ENCODE measurements at regions of chr6 and their contacts with region 1.

Region 1: DNA sequence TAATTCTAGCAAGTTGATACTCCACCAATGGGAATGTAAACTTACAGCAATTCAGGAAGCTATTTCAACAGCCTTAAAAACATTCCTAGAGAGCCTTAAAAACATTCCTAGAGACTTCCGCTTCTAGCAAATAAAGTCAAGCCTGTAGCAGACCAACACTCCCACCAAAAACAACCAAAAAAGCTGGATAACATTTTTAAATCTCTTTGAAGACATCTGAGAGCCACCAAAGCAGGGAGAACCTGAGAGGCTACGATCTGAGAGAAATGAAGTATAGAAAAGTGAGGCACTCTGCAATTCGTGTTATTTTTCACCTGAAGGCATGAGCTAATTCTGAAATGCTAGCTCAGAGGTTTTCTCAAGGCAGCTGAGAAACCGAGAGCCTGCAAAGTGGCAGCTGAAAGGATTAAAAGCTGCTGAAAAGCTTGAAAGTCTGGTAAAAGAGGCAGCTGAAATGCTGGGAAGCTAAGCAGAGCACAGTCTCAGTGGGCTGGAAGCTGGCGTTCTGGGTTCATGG is 20.9 kb downstream of the GPR63 start:
- DNase-seq: no peak
- H3K4me3 Mint-ChIP-seq: no peak overlapping the region
- H3K27ac Mint-ChIP-seq: no peak overlapping the region
- H3K4me1 Mint-ChIP-seq: peaks cover 6% of the 10 kb centered on the region
- H3K27me3 Mint-ChIP-seq: no peaks in the 10 kb centered on the region

Region 2: DNA sequence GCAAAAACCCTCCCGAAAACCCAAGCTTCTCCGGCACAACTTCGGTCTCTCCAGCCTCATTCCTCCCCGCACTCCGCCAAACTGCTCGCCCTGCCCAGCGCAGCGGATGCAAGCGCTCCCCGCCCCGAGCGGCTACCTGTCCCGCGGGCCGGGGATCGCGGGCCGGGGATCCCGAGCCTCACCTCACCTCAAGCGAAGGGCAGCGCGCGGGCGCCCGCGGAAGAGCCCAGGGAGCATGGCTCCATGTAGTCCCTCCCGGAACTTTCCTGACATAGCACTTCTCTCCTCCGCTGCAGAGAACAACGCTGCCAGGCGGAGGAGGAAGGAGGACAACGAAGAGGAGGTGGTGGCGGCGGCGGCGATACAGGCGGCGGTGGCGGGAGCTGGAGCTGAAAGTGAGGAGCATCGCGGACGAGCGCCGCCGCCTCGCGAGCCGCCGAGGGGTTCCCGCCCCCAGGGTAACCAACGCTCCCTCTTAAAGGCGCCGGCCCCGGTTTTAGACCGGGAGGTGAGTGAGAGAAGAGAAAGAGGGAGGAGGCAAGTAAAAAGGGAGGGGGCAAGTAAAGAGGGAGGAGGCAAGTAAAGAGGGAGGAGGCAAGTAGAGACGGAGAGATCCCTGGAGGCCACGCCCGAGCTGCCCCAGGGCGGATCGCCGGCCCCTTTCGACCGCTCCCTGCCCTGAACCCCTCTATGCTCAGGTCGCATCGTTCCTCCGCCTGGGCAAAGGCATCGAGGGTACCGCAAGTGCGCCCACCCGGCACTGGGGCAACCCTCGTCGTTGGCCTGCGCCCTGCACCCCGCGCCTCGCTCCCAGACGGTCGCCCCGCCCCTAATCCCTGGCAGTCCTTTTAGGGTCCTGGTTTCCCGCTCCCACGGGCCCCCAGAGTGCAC is 21.0 kb after region 1 on chr6 and contains the start of gene GPR63:
- intact Hi-C with region 1: loop called (anchors 2 kb)
- DNase-seq: peak; percentile 84
- H3K4me3 Mint-ChIP-seq: peak within 1 kb of the TSS; percentile 90
- H3K27ac Mint-ChIP-seq: peak within 1 kb of the TSS; percentile 43
- H3K4me1 Mint-ChIP-seq: peaks cover 34% of the 10 kb centered on the region
- H3K27me3 Mint-ChIP-seq: peaks cover 24% of the 10 kb centered on the region
- total RNA-seq, gene GPR63: 4.5 and 5.0 TPM in 2 replicates

Region 3: GRCh38 chr6:97177905-97178304 is 361.5 kb after region 1 on chr6:
- intact Hi-C with region 1: no loop called
- DNase-seq: no peak
- H3K4me3 Mint-ChIP-seq: no peak overlapping the region
- H3K27ac Mint-ChIP-seq: no peak overlapping the region
- H3K4me1 Mint-ChIP-seq: peaks cover 9% of the 10 kb centered on the region
- H3K27me3 Mint-ChIP-seq: no peaks in the 10 kb centered on the region

Measured in activated T-helper 2 cell treated with anti-CD3 and anti-CD28 coated beads, Interferon-gamma antibody, Interleukin-2, Interleukin-4, amounts not matched to agents 10 μg/mL and 5 μg/mL and 100 μg/mL, durations not matched to agents 14 hours and 24 hours and 36 hours (primary cell).